ENCODE measurements at regions of chr9 and their contacts with region 1.

Region 1: GRCh38 chr9:32384364-32385151 is at the start of gene ACO1:
- DNase-seq: peak; percentile 91
- ATAC-seq: peak; percentile 99
- H3K4me3 ChIP-seq: peak within 1 kb of the TSS; percentile 52 to 89 (median 84)
- H3K4me3 Mint-ChIP-seq: peak within 1 kb of the TSS; percentile 90
- H3K27ac ChIP-seq: peak within 1 kb of the TSS; percentile 16 to 61
- H3K27ac Mint-ChIP-seq: peak within 1 kb of the TSS; percentile 78
- H3K4me1 ChIP-seq: peaks cover 10 to 17% of the 10 kb centered on the region in 2 donors
- H3K4me1 Mint-ChIP-seq: peaks cover 8% of the 10 kb centered on the region
- H3K27me3 ChIP-seq: peaks cover 0 to 29% (median 15%) of the 10 kb centered on the region in 4 experiments
- H3K27me3 Mint-ChIP-seq: peaks cover 24% of the 10 kb centered on the region
- CTCF ChIP-seq: no peak
- total RNA-seq, gene ACO1: 9.1 and 9.9 TPM in 2 replicates

Region 2: DNA sequence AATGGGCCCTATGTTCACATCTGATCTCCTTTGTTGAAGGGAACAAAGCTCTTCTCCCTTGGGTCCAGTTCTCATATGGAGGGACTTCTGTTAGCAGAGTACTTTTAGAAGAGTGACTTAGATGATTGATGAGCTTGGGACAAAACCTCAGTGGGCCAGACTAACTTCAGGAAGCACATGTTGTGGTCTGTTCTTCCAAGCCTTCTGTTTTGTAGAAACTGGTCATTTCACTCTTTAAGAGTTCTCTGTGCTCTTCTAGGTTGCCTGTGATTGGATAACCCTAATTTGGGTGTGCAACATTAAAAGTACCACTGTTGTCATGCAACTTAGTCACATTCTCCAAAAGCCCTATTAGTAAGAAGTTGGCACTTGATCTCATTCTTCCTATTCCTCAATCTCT is 183.7 kb before region 1 on chr9:
- CTCF ChIA-PET with region 1: no interaction called
- POLR2A ChIA-PET with region 1: no interaction called
- intact Hi-C with region 1: no loop called
- DNase-seq: no peak
- ATAC-seq: no peak
- H3K4me3 ChIP-seq: no peak overlapping the region
- H3K4me3 Mint-ChIP-seq: no peak overlapping the region
- H3K27ac ChIP-seq: no peak overlapping the region
- H3K27ac Mint-ChIP-seq: no peak overlapping the region
- H3K4me1 ChIP-seq: no peaks in the 10 kb centered on the region
- H3K4me1 Mint-ChIP-seq: no peaks in the 10 kb centered on the region
- H3K27me3 ChIP-seq: no peaks in the 10 kb centered on the region
- H3K27me3 Mint-ChIP-seq: no peaks in the 10 kb centered on the region
- CTCF ChIP-seq: no peak

Region 3: DNA sequence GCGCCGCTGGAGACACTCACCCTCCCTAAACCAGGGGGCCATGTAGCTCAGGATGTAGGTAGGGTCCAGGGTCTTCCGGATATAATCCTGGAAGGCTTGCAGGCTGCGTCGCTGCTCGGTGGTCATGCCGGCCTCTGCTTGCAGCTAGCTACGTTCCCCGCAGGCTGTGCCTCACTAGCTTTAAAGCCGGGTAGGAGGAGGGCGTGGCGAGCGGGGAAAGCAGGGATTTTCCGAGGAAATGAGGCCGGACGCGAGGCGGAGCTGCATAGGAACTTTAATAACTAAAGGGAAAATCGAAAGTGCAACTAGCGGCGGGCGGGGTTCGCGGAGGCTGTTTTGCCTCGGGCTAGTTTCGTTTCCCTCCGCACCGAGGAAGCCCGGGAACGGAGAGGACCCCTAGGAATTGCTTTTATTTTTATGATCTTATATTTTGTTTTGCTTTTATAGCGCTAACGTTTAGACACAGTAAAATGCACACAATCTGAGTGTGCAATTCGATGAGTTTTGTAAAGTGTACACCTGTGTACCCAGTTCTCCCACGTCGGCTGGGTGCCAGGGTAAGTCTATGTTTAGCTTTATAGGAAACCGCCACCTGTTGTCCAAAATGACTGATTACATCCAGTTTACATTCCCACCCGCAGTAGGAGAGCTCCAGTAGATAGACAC is 141.6 kb after region 1 on chr9 and contains the start of gene RIGI:
- CTCF ChIA-PET with region 1: interaction called, 48 read pairs
- POLR2A ChIA-PET with region 1: interaction called, 12 read pairs
- intact Hi-C with region 1: loop called (anchors 1 kb)
- DNase-seq: peak; percentile 82
- ATAC-seq: peak; percentile 78
- H3K4me3 ChIP-seq: peak within 1 kb of the TSS; percentile 73 to 98 (median 84)
- H3K4me3 Mint-ChIP-seq: peak within 1 kb of the TSS; percentile 95
- H3K27ac ChIP-seq: peak within 1 kb of the TSS; percentile 73 to 74
- H3K27ac Mint-ChIP-seq: peak within 1 kb of the TSS; percentile 93
- H3K4me1 ChIP-seq: peaks cover 27 to 31% of the 10 kb centered on the region in 2 donors
- H3K4me1 Mint-ChIP-seq: peaks cover 54% of the 10 kb centered on the region
- H3K27me3 ChIP-seq: no peaks in the 10 kb centered on the region
- H3K27me3 Mint-ChIP-seq: no peaks in the 10 kb centered on the region
- CTCF ChIP-seq: peak; percentile 59
- total RNA-seq, gene RIGI: 24.9 and 26.3 TPM in 2 replicates

Region 4: GRCh38 chr9:32550562-32551433 is 166.2 kb after region 1 on chr9:
- CTCF ChIA-PET with region 1: interaction called, 30 read pairs
- POLR2A ChIA-PET with region 1: interaction called, 9 read pairs
- intact Hi-C with region 1: loop called (anchors 1 kb)
- DNase-seq: peak; percentile 97
- ATAC-seq: peak; percentile 84
- H3K4me3 ChIP-seq: peak overlapping the region; percentile 86 to 98 (median 87)
- H3K4me3 Mint-ChIP-seq: peak overlapping the region; percentile 91
- H3K27ac ChIP-seq: peak overlapping the region; percentile 89 to 92
- H3K27ac Mint-ChIP-seq: peak overlapping the region; percentile 91
- H3K4me1 ChIP-seq: peaks cover 14 to 15% of the 10 kb centered on the region in 2 donors
- H3K4me1 Mint-ChIP-seq: peaks cover 34% of the 10 kb centered on the region
- H3K27me3 ChIP-seq: no peaks in the 10 kb centered on the region
- H3K27me3 Mint-ChIP-seq: no peaks in the 10 kb centered on the region
- CTCF ChIP-seq: peak; percentile 5

Measured in B cell (primary cell).